MCF 10A (cell line): ENCODE measurements at regions of chr19 and their contacts with region 1.

Region 1: GRCh38 chr19:46746281-46747013 is at the start of gene STRN4:
- DNase-seq: no peak
- H3K4me3 Mint-ChIP-seq: peak within 1 kb of the TSS; percentile 97
- H3K27ac Mint-ChIP-seq: peak within 1 kb of the TSS; percentile 88
- H3K4me1 Mint-ChIP-seq: peaks cover 19% of the 10 kb centered on the region
- H3K27me3 Mint-ChIP-seq: no peaks in the 10 kb centered on the region
- CTCF ChIP-seq: no peak
- total RNA-seq, gene STRN4: 90.1 and 92.3 TPM in 2 replicates

Region 2: GRCh38 chr19:46607448-46607841 is 139.0 kb before region 1 on chr19:
- CTCF ChIA-PET with region 1: no interaction called
- POLR2A ChIA-PET with region 1: no interaction called
- intact Hi-C with region 1: no loop called
- DNase-seq: no peak
- H3K4me3 Mint-ChIP-seq: no peak overlapping the region
- H3K27ac Mint-ChIP-seq: no peak overlapping the region
- H3K4me1 Mint-ChIP-seq: no peaks in the 10 kb centered on the region
- H3K27me3 Mint-ChIP-seq: no peaks in the 10 kb centered on the region
- CTCF ChIP-seq: no peak

Region 3: DNA sequence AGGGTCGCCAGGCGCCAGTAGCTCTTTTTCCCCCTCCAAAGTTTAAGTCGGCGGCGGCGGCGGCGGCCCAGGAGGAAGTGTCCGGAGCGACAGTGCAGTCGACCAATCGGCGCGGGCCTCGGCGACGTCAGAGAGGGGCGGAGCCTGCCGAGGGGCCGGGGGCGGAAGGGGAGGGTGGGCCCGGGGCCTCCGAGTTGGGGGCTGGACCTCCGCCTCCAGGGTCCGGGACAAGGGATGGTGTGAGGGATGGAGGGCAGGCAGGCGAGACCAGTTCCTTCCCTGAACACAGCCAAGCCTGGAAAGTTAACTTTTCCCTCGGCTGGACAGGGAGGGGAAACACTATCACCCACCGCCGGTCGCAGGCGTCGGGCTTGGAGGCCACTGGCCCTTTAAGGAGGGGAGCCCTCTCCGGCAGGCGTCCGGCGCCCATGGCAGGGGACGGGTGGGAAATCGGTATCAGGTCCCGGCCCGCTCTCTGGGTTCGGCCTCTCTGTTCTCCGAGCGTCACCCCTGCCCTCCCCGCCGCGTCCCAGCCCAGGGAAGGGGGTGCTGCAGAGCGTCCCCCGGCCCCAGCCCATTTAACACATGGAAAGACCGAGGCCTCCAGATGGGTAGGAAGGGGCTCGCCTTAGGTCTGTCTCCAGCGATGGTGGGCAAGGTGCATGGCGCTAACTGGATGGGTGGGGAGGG is 29.3 kb before region 1 on chr19 and contains the start of gene PRKD2:
- CTCF ChIA-PET with region 1: interaction called, 3 read pairs
- POLR2A ChIA-PET with region 1: interaction called, 14 read pairs
- intact Hi-C with region 1: no loop called
- DNase-seq: peak; percentile 76
- H3K4me3 Mint-ChIP-seq: peak within 1 kb of the TSS; percentile 97
- H3K27ac Mint-ChIP-seq: peak within 1 kb of the TSS; percentile 99
- H3K4me1 Mint-ChIP-seq: no peaks in the 10 kb centered on the region
- H3K27me3 Mint-ChIP-seq: no peaks in the 10 kb centered on the region
- CTCF ChIP-seq: no peak
- total RNA-seq, gene PRKD2: 30.4 and 35.9 TPM in 2 replicates

Region 4: GRCh38 chr19:46759817-46760333 is 13.4 kb after region 1 on chr19:
- CTCF ChIA-PET with region 1: interaction called, 15 read pairs
- POLR2A ChIA-PET with region 1: no interaction called
- intact Hi-C with region 1: no loop called
- DNase-seq: peak; percentile 68
- H3K4me3 Mint-ChIP-seq: no peak overlapping the region
- H3K27ac Mint-ChIP-seq: no peak overlapping the region
- H3K4me1 Mint-ChIP-seq: peaks cover 12% of the 10 kb centered on the region
- H3K27me3 Mint-ChIP-seq: no peaks in the 10 kb centered on the region
- CTCF ChIP-seq: no peak

Region 5: GRCh38 chr19:46821498-46822409 is 75.3 kb after region 1 on chr19:
- CTCF ChIA-PET with region 1: interaction called, 3 read pairs
- POLR2A ChIA-PET with region 1: no interaction called
- intact Hi-C with region 1: loop called (anchors 1 kb)
- DNase-seq: no peak
- H3K4me3 Mint-ChIP-seq: no peak overlapping the region
- H3K27ac Mint-ChIP-seq: no peak overlapping the region
- H3K4me1 Mint-ChIP-seq: no peaks in the 10 kb centered on the region
- H3K27me3 Mint-ChIP-seq: no peaks in the 10 kb centered on the region
- CTCF ChIP-seq: no peak

Region 6: DNA sequence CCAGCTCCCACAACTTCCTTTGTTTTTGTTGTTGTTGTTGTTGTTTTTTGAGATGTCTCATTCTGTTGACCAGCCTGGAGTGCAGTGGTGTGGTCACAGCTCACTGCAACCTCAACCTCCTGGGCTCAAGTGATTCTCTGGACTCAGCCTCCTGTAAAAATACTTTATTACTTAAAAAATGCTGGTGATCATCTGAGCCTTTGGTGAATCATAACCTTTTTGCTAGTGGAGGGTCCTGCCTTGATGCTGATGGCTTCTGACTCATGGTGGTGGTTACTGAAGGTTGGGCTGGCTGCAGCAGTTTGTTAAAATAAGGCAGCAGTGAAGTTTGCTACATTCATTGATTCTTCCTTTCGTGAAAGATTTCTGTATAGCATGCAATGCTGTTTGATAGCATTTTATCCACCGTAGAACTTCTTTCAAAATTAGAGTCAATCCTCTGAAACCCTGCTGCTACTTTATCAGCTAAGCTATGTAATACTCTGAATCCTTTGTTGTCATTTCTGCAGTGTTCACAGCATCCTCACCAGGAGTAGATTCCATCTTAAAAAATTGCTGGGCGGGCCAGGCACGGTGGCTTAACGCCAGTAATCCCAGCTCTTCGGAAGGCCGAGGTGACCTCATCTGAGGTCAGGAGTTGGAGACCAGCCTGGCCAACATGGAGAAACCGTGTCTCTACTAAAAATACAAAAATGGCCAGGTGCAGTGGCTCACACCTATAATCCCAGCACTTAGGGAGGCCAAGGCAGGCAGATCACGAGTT is 132.3 kb after region 1 on chr19:
- CTCF ChIA-PET with region 1: no interaction called
- POLR2A ChIA-PET with region 1: no interaction called
- intact Hi-C with region 1: no loop called
- DNase-seq: peak; percentile 58
- H3K4me3 Mint-ChIP-seq: no peak overlapping the region
- H3K27ac Mint-ChIP-seq: no peak overlapping the region
- H3K4me1 Mint-ChIP-seq: peaks cover 11% of the 10 kb centered on the region
- H3K27me3 Mint-ChIP-seq: no peaks in the 10 kb centered on the region
- CTCF ChIP-seq: no peak